ENCODE measurements at regions of chr20 and their contacts with region 1.

Region 1: DNA sequence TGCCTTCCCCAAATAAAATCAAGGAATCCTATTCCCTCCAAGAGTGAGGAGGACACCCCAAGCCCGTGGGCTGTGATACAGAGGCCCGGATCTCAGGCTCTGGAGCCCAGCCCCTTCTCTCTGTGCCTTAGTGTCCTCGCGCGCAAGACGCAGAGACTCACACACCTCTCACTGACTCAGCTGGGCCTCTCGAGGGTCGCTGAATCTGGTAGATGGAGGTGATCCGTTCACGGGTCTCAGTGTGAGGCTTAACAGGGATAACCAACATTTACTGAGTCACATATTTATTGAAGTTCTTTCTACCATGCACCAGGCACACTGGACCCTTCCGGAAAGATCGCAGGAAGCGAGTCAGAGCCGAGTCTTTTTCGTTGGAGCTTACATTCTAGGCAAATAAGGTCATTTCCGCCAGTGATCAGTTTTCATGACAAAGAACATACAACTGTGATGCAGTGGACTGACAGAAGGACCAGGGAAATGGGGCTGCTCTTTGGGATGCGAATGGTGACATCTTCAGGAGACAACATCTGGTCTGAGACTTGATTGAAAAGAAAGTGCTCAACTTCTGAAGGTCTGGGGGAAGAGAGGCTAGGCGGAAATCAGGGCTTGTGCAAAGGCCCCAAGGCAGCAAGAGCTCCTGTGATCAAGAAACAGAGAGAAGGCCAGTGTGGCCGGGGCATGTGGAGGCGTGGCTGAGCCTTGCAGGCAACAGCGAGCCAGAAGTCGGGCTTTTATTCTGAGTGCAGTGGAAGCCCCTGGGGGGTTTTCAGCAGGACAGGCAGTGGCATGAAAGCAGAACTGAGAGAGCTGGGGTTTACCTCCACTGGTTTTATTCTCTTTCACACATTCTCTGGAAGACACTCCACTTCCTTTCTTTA is 56.8 kb downstream of the APCDD1L start:
- DNase-seq: peak; percentile 89
- ATAC-seq: peak; percentile 99
- H3K4me3 ChIP-seq: peak overlapping the region; percentile 32
- H3K27ac ChIP-seq: peak overlapping the region; percentile 49
- H3K4me1 ChIP-seq: peaks cover 29% of the 10 kb centered on the region
- H3K27me3 ChIP-seq: no peaks in the 10 kb centered on the region
- CTCF ChIP-seq: no peak
- EP300 ChIP-seq: peak; percentile 90 to 95
- POLR2A ChIP-seq: no peak
- RAD21 ChIP-seq: no peak

Region 2: GRCh38 chr20:57622579-57623377 is 835.6 kb before region 1 on chr20:
- CTCF ChIA-PET with region 1: no interaction called
- POLR2A ChIA-PET with region 1: no interaction called
- RAD21 ChIA-PET with region 1: no interaction called
- SMC1A ChIA-PET with region 1: no interaction called
- in situ Hi-C with region 1: loop called (anchors 10 kb)
- intact Hi-C with region 1: no loop called
- DNase-seq: no peak
- ATAC-seq: peak; percentile 24
- H3K4me3 ChIP-seq: no peak overlapping the region
- H3K27ac ChIP-seq: no peak overlapping the region
- H3K4me1 ChIP-seq: peaks cover 40% of the 10 kb centered on the region
- H3K27me3 ChIP-seq: no peaks in the 10 kb centered on the region
- CTCF ChIP-seq: peak; percentile 64 to 93 (median 90)
- EP300 ChIP-seq: no peak
- POLR2A ChIP-seq: no peak
- RAD21 ChIP-seq: peak; percentile 73

Region 3: GRCh38 chr20:58309575-58310290 is 148.7 kb before region 1 on chr20 and contains the start of gene RAB22A:
- CTCF ChIA-PET with region 1: no interaction called
- POLR2A ChIA-PET with region 1: interaction called, 4 read pairs
- RAD21 ChIA-PET with region 1: interaction called, 4 read pairs
- SMC1A ChIA-PET with region 1: interaction called, 3 read pairs
- in situ Hi-C with region 1: no loop called
- intact Hi-C with region 1: loop called (anchors 5 kb)
- DNase-seq: no peak
- ATAC-seq: peak; percentile 73
- H3K4me3 ChIP-seq: peak within 1 kb of the TSS; percentile 100
- H3K27ac ChIP-seq: peak within 1 kb of the TSS; percentile 65
- H3K4me1 ChIP-seq: peaks cover 16% of the 10 kb centered on the region; the same call in 1 of the 2 replicates
- H3K27me3 ChIP-seq: no peaks in the 10 kb centered on the region
- CTCF ChIP-seq: no peak
- EP300 ChIP-seq: no peak
- POLR2A ChIP-seq: peak; percentile 96
- RAD21 ChIP-seq: no peak
- polyA plus RNA-seq, gene RAB22A: 2.7 to 3.7 TPM

Region 4: GRCh38 chr20:58447511-58448391 is 10.7 kb before region 1 on chr20:
- CTCF ChIA-PET with region 1: interaction called, 24 read pairs
- POLR2A ChIA-PET with region 1: interaction called, 6 read pairs
- RAD21 ChIA-PET with region 1: interaction called, 4 read pairs
- SMC1A ChIA-PET with region 1: interaction called, 33 read pairs
- in situ Hi-C with region 1: no loop called
- intact Hi-C with region 1: no loop called
- DNase-seq: no peak
- ATAC-seq: peak; percentile 86
- H3K4me3 ChIP-seq: no peak overlapping the region
- H3K27ac ChIP-seq: no peak overlapping the region
- H3K4me1 ChIP-seq: peaks cover 13% of the 10 kb centered on the region
- H3K27me3 ChIP-seq: no peaks in the 10 kb centered on the region
- CTCF ChIP-seq: peak; percentile 71 to 78 (median 73)
- EP300 ChIP-seq: no peak
- POLR2A ChIP-seq: no peak
- RAD21 ChIP-seq: peak; percentile 86

Region 5: GRCh38 chr20:58810116-58810878 is 351.9 kb after region 1 on chr20:
- CTCF ChIA-PET with region 1: no interaction called
- POLR2A ChIA-PET with region 1: no interaction called
- RAD21 ChIA-PET with region 1: no interaction called
- SMC1A ChIA-PET with region 1: no interaction called
- in situ Hi-C with region 1: no loop called
- intact Hi-C with region 1: no loop called
- DNase-seq: no peak
- ATAC-seq: no peak
- H3K4me3 ChIP-seq: no peak overlapping the region
- H3K27ac ChIP-seq: no peak overlapping the region
- H3K4me1 ChIP-seq: no peaks in the 10 kb centered on the region
- H3K27me3 ChIP-seq: no peaks in the 10 kb centered on the region; a peak in 2 of 4 replicates
- CTCF ChIP-seq: no peak
- EP300 ChIP-seq: no peak
- POLR2A ChIP-seq: no peak
- RAD21 ChIP-seq: no peak